Left ventricle myocardium superior (tissue), 1 donor: ENCODE measurements at regions of chr15 and their contacts with region 1.

Region 1: GRCh38 chr15:49235446-49236124 is 65.5 kb downstream of the GALK2 start:
- DNase-seq: no peak
- ATAC-seq: peak; percentile 88

Region 2: GRCh38 chr15:49421991-49422390 is 186.4 kb after region 1 on chr15:
- intact Hi-C with region 1: loop called (anchors 10 kb)
- DNase-seq: peak; percentile 78
- ATAC-seq: peak; percentile 71

Region 3: DNA sequence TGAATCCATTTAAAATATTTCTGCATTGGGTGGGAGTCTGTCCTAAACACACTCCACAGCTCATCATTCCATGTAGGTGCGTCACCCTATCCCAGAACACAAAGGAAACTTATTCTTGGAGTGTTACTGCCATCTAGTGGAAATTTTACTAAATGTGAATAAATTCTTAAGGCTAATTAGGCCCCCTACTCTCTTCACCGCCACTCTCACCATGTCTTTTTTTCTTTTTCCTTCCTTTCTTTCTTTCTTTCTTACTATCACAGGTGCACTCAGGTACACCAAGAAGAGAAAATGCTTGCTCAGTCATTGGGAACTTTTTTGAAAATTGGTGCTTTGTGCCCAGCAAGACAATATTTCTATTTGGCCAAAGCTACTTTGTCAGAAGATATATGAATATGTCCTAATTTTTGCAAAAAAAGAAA is 909.9 kb after region 1 on chr15:
- intact Hi-C with region 1: loop called (anchors 10 kb)
- DNase-seq: no peak
- ATAC-seq: peak; percentile 82